Lower leg skin (tissue), 4 donors: ENCODE measurements at regions of chr5 and their contacts with region 1.

Region 1: DNA sequence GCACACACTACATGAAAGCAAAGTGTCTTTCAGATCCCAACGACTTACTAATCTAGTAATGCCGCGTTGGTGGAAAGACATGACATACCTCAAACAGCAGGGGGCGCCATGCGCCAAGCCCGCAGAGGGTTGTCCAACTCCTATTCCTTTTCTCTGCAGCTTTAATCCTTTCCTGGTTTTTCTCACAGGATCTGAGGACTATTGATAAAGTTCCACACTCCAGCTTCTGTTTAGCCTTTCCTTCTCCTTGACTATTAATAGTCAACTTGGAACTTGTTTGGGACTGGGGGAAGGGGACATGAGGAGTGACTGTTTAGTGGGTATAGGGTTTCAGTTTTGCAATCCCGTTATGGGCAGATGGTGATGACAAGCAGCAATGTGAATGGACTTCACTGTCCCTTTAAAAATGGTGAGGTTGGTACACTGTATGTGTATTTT is 62.9 kb downstream of the OTULIN start:
- DNase-seq: peak; percentile 79 to 95
- H3K4me3 ChIP-seq: no peak overlapping the region
- CTCF ChIP-seq: peak in 2 of 3 donors; percentile 27 to 55
- POLR2A ChIP-seq: no peak

Region 2: DNA sequence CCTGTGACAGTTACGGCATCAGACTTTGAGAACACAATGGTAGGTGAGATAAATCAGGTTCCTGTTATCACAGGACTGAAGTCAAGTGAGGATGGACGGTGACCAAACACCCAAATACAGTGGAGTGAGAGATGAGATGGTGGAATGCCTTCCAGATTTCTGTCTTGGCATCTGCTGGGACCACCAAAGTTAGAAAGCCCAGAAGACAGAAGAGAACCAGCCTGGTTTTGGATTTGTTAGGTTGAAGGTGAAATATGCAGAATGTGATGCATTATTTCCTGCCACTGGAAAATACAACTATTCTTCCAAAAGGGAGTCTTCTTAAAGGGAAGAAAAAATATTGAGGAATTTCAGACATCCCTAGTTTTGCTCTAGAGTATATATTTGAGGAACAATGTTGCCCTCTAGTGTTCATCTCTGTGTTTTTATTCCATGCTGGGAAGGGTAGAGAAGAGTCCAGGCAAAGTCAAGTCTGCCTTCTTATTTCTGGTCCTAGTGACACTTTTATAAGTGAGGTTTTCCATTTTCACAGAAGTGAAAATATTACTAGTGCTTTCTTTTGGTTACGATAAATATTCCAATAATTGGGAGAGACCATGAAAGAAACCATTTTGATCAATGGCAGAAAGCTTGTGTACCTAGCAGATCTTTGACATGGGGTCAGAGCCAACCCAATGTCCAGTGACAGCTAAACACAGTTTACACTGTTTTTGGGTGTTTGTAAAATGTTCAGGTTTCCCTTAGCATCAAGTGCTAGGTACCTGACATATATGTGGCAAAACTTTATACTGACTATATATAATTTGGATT is 286.4 kb after region 1 on chr5:
- intact Hi-C with region 1: loop called (anchors 5 kb)
- DNase-seq: no peak
- H3K4me3 ChIP-seq: no peak overlapping the region
- CTCF ChIP-seq: peak in 1 of 3 donors; percentile 45
- POLR2A ChIP-seq: no peak